ENCODE measurements at regions of chr14 and their contacts with region 1.

Region 1: GRCh38 chr14:21039585-21040369 is 2.4 kb upstream of the RNASE7 start:
- DNase-seq: peak; percentile 81
- H3K4me3 ChIP-seq: peak overlapping the region in 1 of 4 donors; percentile 13
- H3K27ac ChIP-seq: peak overlapping the region; percentile 74 to 86 (median 80)
- H3K4me1 ChIP-seq: peaks cover 0 to 38% (median 26%) of the 10 kb centered on the region in 4 donors
- H3K27me3 ChIP-seq: no peaks in the 10 kb centered on the region
- CTCF ChIP-seq: peak; percentile 66 to 74 (median 72)
- EP300 ChIP-seq: no peak
- POLR2A ChIP-seq: no peak

Region 2: DNA sequence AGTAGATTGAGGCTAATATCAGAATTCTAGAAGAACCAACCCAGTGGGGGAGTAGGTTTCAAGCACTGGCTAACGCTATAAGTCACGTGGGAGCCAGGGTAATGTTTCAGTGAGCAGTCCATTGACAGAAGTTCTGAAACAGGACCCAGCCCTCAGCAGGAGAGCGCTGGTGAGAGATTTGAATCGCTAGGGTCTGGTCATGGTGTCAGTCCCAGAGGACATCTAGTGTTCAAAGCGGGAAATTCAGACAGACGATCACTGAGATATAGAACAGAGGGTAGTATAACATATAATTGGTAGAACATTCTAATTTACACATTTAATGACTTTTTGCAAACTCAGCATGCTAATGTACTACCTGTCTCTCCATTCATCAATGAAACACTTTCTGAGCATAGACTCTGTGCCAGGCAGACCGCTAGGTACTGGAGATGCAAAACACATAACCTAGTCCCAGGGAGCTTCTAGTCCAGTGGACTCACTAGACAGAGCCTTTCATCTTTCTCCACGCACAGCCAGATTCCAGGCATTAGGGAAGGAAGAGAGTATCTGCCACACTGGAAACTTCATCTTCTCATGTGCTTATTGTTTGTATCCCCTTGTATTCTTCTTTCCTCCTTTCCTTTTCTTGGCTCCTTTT is 184.0 kb before region 1 on chr14:
- intact Hi-C with region 1: loop called (anchors 2 kb)
- DNase-seq: no peak
- H3K4me3 ChIP-seq: no peak overlapping the region
- H3K27ac ChIP-seq: no peak overlapping the region
- H3K4me1 ChIP-seq: peaks cover 0 to 6% (median 2%) of the 10 kb centered on the region in 4 donors
- H3K27me3 ChIP-seq: peaks cover 0 to 8% (median 7%) of the 10 kb centered on the region in 3 donors
- CTCF ChIP-seq: peak; percentile 26 to 55 (median 49)
- EP300 ChIP-seq: no peak
- POLR2A ChIP-seq: no peak

Region 3: DNA sequence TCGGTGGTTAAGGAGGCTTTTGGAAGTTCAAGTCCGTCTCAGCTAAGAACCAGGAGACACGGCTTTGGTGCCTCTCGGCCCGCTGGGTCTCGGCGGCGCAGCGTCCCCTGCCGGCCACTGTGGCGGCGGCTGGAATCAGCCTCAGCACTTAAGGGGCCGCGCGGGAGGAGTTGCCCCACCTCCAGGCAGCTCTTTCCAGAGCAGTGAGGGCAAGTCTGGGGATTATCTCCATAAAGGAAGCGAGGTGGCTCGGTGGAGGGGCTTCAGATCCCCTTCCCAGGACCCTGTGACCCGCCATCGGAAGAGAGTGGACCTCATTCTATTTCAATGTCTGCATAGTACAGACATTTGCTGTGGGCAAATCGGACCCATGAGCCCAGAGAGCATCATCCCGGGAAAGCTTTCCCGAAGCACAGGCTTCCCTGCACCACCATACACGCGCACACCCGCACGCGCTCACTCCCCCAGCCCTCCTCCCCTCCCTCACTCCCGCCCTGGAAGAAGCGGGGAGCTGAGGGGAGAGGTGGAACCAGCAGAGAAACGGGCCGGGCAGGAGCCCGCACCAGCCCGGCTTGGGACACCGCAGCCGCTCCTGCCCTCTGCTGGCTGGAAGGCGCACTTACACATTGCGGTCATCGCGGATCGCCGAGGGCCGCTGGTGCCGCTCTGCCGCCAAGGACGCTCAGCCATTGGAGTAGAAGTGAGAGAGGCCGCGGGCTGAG is 68.6 kb before region 1 on chr14:
- intact Hi-C with region 1: loop called (anchors 5 kb)
- DNase-seq: peak; percentile 92
- H3K4me3 ChIP-seq: peak overlapping the region; percentile 32 to 62 (median 60)
- H3K27ac ChIP-seq: peak overlapping the region; percentile 79 to 88 (median 80)
- H3K4me1 ChIP-seq: peaks cover 0 to 11% (median 10%) of the 10 kb centered on the region in 4 donors
- H3K27me3 ChIP-seq: no peaks in the 10 kb centered on the region
- CTCF ChIP-seq: peak; percentile 72 to 89 (median 82)
- EP300 ChIP-seq: no peak
- POLR2A ChIP-seq: no peak

Region 4: GRCh38 chr14:21014761-21015190 is 25.0 kb before region 1 on chr14:
- intact Hi-C with region 1: loop called (anchors 1 kb)
- DNase-seq: peak; percentile 93
- H3K4me3 ChIP-seq: no peak overlapping the region
- H3K27ac ChIP-seq: peak overlapping the region in 1 of 4 donors; percentile 12
- H3K4me1 ChIP-seq: peaks cover 0 to 14% (median 3%) of the 10 kb centered on the region in 4 donors
- H3K27me3 ChIP-seq: no peaks in the 10 kb centered on the region
- CTCF ChIP-seq: peak; percentile 93 to 96 (median 94)
- EP300 ChIP-seq: no peak
- POLR2A ChIP-seq: no peak

Region 5: DNA sequence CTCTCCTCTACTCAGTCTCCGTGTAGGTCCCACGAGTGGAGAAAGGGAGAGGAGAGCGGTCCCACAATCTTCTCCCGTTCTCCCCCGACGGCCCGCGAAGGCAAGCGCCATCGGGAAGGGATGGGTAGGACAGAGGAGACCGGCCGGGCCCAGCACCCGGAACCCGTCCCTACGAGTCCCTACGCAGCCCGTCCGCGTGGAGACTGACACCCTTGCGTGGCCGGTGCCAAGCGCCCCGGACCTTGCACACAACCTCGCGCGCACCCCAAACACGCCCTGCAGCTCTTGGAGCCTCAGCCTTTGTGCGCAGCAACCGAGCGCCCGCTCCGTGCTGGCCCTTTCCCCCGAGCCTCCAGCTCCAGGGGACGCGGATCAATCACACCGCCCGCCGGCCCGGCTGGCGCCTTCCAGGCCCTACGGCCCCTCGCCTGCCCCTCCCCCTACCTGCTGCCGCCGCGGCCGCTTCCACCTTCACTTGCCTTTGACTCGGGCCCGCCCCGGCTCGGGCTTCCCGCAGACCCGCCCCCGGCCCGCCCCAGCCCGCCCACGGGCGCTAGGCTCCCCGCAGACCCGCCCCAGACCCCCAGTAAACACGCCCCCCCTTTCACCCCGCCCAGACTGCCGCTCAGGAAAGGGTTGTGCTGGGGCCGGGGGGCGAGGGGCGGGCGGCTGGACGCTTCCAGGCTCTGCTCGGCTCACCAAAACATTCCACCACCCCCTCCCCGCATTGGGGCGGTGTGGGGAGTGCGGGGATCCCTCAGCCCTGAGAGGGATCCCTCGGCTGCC is 15.0 kb before region 1 on chr14 and contains the start of gene NDRG2:
- intact Hi-C with region 1: loop called (anchors 2 kb)
- DNase-seq: peak; percentile 94
- H3K4me3 ChIP-seq: peak within 1 kb of the TSS; percentile 84 to 96 (median 88)
- H3K27ac ChIP-seq: peak within 1 kb of the TSS; percentile 93 to 95 (median 93)
- H3K4me1 ChIP-seq: peaks cover 0 to 43% (median 35%) of the 10 kb centered on the region in 4 donors
- H3K27me3 ChIP-seq: no peaks in the 10 kb centered on the region
- CTCF ChIP-seq: no peak
- EP300 ChIP-seq: no peak
- POLR2A ChIP-seq: peak in 1 of 2 donors; percentile 35
- total RNA-seq, gene NDRG2: 184 to 276 (median 235) TPM

Region 6: DNA sequence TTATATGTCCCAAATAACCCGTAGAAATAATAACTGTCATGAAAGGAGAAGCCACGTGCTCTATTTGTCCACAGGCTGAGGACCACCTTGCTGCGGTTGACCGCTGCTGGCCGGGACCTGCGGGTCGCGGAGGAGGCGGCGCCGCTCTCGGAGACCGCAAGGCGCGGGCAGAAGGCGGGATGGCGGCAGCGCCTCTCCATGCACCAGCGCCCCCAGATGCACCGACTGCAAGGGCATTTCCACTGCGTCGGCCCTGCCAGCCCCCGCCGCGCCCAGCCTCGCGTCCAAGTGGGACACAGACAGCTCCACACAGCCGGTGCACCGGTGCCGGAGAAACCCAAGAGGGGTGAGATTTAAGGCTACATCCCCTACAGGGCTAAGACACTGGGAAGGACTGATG is 261.1 kb after region 1 on chr14:
- intact Hi-C with region 1: no loop called
- DNase-seq: no peak
- H3K4me3 ChIP-seq: peak overlapping the region in 3 of 4 donors; percentile 11 to 26 (median 16)
- H3K27ac ChIP-seq: no peak overlapping the region
- H3K4me1 ChIP-seq: peaks cover 0 to 6% (median 5%) of the 10 kb centered on the region in 4 donors
- H3K27me3 ChIP-seq: peaks cover 0 to 29% (median 0%) of the 10 kb centered on the region in 3 donors
- CTCF ChIP-seq: no peak
- EP300 ChIP-seq: no peak
- POLR2A ChIP-seq: no peak

Measured in sigmoid colon (tissue), 7 donors.